K562 (cell line): ENCODE measurements at regions of chr18 and their contacts with region 1.

Region 1: GRCh38 chr18:51041677-51042352 is 11.8 kb downstream of the SMAD4 start:
- DNase-seq: no peak
- ATAC-seq: no peak
- H3K4me3 ChIP-seq: no peak overlapping the region
- H3K27ac ChIP-seq: no peak overlapping the region
- H3K4me1 ChIP-seq: peaks cover 7 to 20% of the 10 kb centered on the region in 2 experiments; a peak in 4 of 5 replicates
- H3K27me3 ChIP-seq: no peaks in the 10 kb centered on the region
- CTCF ChIP-seq: no peak
- EP300 ChIP-seq: no peak
- POLR2A ChIP-seq: no peak
- RAD21 ChIP-seq: no peak

Region 2: GRCh38 chr18:50247561-50247960 is 794.3 kb before region 1 on chr18:
- CTCF ChIA-PET with region 1: no interaction called
- POLR2A ChIA-PET with region 1: no interaction called
- in situ Hi-C with region 1: no loop called
- intact Hi-C with region 1: no loop called
- DNase-seq: no peak
- ATAC-seq: no peak
- H3K4me3 ChIP-seq: no peak overlapping the region
- H3K27ac ChIP-seq: no peak overlapping the region
- H3K4me1 ChIP-seq: no peaks in the 10 kb centered on the region
- H3K27me3 ChIP-seq: no peaks in the 10 kb centered on the region
- CTCF ChIP-seq: no peak
- EP300 ChIP-seq: no peak
- POLR2A ChIP-seq: no peak
- RAD21 ChIP-seq: no peak

Region 3: DNA sequence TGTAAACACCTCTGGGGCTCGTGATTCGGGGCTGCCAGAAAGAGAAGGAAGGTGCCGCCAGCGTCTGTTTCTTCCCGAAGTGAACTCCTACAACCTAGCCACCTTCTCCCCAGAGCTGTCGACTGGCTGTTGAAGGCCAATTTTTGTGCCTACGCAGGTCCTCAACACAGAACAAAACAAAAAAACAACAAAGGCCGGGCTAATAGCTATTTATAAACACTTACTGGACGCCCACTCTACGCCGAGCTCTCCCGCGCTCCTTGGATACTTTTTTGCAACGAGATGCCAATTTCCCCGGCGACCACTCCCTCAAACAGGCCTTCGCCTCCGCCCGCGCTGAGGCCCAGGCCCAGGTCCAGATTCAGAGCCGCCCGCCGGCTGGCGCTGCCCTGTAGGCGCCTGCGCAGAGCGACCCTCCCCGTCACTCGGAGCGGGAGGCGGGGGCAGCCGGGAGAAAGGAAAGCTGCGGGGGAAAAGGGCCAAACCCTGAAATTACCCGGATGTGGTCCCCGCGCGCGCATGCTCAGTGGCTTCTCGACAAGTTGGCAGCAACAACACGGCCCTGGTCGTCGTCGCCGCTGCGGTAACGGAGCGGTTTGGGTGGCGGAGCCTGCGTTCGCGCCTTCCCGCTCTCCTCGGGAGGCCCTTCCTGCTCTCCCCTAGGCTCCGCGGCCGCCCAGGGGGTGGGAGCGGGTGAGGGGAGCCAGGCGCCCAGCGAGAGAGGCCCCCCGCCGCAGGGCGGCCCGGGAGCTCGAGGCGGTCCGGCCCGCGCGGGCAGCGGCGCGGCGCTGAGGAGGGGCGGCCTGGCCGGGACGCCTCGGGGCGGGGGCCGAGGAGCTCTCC is 11.9 kb before region 1 on chr18 and contains the start of gene SMAD4:
- CTCF ChIA-PET with region 1: no interaction called
- POLR2A ChIA-PET with region 1: interaction called, 14 read pairs
- in situ Hi-C with region 1: no loop called
- intact Hi-C with region 1: no loop called
- DNase-seq: peak; percentile 93 to 94 (median 94)
- ATAC-seq: peak; percentile 86
- H3K4me3 ChIP-seq: peak within 1 kb of the TSS; percentile 75
- H3K27ac ChIP-seq: peak within 1 kb of the TSS; percentile 94
- H3K4me1 ChIP-seq: peaks cover 7 to 25% of the 10 kb centered on the region in 2 experiments; a peak in 4 of 5 replicates
- H3K27me3 ChIP-seq: no peaks in the 10 kb centered on the region
- CTCF ChIP-seq: no peak
- EP300 ChIP-seq: no peak
- POLR2A ChIP-seq: peak; percentile 91
- RAD21 ChIP-seq: no peak
- polyA plus RNA-seq, gene SMAD4: 5.7 to 7.1 TPM

Region 4: GRCh38 chr18:51330148-51330547 is 288.3 kb after region 1 on chr18:
- CTCF ChIA-PET with region 1: no interaction called
- POLR2A ChIA-PET with region 1: no interaction called
- in situ Hi-C with region 1: no loop called
- intact Hi-C with region 1: no loop called
- DNase-seq: no peak
- ATAC-seq: no peak
- H3K4me3 ChIP-seq: no peak overlapping the region
- H3K27ac ChIP-seq: no peak overlapping the region
- H3K4me1 ChIP-seq: no peaks in the 10 kb centered on the region
- H3K27me3 ChIP-seq: no peaks in the 10 kb centered on the region
- CTCF ChIP-seq: no peak
- EP300 ChIP-seq: no peak
- POLR2A ChIP-seq: no peak
- RAD21 ChIP-seq: no peak